Motor neuron (in vitro differentiated cells): ENCODE measurements at regions of chr3 and their contacts with region 1.

Region 1: DNA sequence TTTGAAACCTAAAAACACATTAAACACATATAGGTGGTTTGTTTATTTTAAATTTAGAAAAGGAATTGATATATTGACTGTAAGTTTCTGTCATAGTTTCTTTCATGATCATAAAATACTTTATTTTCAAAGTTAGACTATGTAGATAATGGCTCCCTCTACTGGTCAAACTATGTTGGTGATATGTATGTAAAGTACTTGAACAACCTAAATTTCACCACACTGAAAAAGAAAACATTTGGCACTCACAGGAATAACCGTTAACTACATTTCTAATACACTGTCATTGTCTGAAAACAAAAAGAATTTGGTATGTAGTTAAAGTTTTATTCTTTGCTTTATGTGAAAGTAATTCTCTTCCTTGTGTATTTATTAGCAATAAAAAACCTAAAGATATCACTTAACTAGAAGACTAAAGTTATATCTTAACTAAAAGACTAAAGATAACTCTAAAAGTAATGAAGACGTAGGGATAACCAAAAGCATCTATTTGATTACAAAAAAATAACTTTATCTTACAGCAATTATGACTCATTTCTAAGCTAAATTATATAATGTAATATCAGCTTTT is 427.5 kb downstream of the VGLL3 start:
- ATAC-seq: peak in 2 of 8 experiments; percentile 30 to 46
- H3K4me3 ChIP-seq: no peak overlapping the region
- H3K27ac ChIP-seq: no peak overlapping the region
- H3K4me1 ChIP-seq: no peaks in the 10 kb centered on the region

Region 2: DNA sequence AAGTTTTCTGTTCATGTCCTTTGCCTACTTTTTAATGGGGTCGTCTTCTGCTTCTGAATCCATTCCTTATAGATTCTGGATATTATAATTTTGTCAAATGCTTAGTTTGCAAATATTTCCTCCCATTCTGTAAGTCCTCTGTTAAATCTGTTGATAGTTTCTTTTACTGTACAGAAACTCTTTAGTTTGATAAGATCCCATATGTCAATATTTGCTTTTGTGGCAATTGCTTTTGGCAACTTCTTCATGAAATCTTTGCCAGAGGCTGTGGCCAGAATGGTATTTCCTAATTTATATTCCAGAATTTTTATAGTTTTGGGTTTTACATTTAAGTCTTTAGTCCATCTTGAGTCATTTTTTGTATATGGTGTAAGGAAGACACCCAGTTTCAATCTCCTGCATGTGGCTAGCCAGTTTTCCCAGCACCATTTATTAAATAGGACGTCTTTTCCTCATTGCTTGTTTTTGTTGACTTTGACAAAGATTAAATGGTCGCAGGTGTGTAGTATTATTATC is 1977.1 kb before region 1 on chr3:
- in situ Hi-C with region 1: no loop called
- ATAC-seq: no peak
- H3K4me3 ChIP-seq: no peak overlapping the region
- H3K27ac ChIP-seq: no peak overlapping the region
- H3K4me1 ChIP-seq: no peaks in the 10 kb centered on the region

Region 3: DNA sequence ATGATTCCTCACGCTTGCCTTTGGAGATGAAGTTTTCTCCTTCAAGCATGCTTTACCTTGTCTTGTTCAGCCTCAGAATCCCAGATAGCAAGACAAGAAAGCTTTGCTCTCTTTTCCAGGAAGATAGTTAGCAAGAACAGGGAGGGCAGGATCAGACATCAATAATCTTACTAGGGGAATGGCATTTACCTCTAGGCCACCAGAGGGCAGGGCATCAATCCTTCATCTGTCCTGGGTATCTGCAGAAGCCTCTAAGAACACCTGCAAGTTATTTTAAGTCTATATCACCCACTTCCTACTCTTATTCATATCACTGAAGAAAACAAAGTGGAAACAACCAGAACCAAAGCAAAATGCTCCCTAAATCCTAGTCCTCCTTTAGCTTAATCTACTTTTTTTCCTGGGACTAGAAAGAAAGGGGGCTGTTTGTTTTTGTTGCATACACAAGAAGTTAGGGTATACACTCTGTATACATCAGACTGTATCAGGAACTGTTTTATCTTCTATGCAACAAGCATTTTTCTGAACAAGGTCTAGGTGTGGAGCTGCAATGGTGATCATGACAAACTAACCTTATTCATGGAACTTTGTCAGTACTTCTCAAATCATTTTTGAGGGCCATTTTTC is 742.2 kb before region 1 on chr3:
- in situ Hi-C with region 1: loop called in 1 of 9 experiments (anchors 25 kb)
- ATAC-seq: peak in 4 of 8 experiments; percentile 40 to 82 (median 49)
- H3K4me3 ChIP-seq: no peak overlapping the region
- H3K27ac ChIP-seq: no peak overlapping the region
- H3K4me1 ChIP-seq: no peaks in the 10 kb centered on the region

Region 4: DNA sequence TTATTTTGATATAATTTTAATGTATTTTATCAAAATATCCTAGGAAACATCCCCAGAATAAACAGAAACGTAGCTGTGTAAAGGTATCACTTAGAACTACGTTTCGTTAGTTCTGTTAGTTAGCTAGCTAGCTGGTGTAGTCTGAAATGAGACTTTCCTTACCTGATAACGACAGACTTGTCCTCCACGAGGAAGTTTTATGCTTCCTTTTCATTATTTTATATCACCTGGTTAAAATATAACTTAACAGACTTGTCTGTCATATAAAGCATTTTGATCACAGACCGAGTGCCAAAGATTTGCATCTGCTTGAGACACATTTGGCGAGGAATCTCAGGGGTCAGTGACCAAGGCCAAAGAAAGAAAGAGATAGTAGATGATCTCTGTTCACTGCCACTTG is 402.0 kb before region 1 on chr3:
- in situ Hi-C with region 1: no loop called
- ATAC-seq: no peak
- H3K4me3 ChIP-seq: no peak overlapping the region
- H3K27ac ChIP-seq: no peak overlapping the region
- H3K4me1 ChIP-seq: no peaks in the 10 kb centered on the region